ENCODE measurements at regions of chr15 and their contacts with region 1.

Region 1: DNA sequence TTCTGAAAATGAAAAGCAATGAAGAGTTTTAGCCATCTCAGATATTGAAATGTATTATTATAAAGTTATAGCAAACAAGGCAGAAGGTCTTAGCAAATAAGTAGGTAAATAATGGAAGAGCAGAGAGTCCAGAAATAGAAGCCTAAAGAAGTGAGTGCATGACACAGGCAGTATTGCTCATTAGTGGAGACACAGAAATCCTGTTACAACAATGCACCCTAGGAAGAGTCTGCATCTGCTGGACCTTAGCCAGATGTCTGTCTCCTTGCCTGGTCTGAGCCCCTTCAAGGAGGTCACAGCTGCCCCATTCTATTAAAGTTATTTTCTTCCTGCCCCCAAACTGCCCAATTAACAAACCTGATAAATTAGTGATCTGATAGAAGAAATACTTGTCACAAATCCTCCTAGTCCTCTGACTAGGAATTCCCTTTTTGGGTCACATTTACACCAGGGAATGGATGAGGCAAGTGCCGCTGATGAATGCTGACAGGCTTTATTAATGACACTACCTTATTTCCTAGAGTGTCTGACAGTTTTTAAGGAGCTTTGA is 51.9 kb downstream of the HOMER2 start:
- H3K4me3 Mint-ChIP-seq: no peak overlapping the region
- H3K27ac Mint-ChIP-seq: no peak overlapping the region
- H3K4me1 Mint-ChIP-seq: peaks cover 50% of the 10 kb centered on the region
- H3K27me3 Mint-ChIP-seq: no peaks in the 10 kb centered on the region

Region 2: GRCh38 chr15:82952158-82953081 is 51.8 kb after region 1 on chr15 and contains the start of gene HOMER2:
- intact Hi-C with region 1: loop called (anchors 10 kb)
- H3K4me3 Mint-ChIP-seq: peak within 1 kb of the TSS; percentile 66
- H3K27ac Mint-ChIP-seq: peak within 1 kb of the TSS; percentile 57
- H3K4me1 Mint-ChIP-seq: peaks cover 6% of the 10 kb centered on the region
- H3K27me3 Mint-ChIP-seq: peaks cover 11% of the 10 kb centered on the region

Measured in dendritic cell treated with granulocyte-macrophage colony-stimulating factor and Interleukin-4, amounts not matched to agents 40 ng/mL and 50 ng/mL, for 4 days (primary cell).